Endothelial cell of umbilical vein (primary cell): ENCODE measurements at regions of chr16 and their contacts with region 1.

Region 1: DNA sequence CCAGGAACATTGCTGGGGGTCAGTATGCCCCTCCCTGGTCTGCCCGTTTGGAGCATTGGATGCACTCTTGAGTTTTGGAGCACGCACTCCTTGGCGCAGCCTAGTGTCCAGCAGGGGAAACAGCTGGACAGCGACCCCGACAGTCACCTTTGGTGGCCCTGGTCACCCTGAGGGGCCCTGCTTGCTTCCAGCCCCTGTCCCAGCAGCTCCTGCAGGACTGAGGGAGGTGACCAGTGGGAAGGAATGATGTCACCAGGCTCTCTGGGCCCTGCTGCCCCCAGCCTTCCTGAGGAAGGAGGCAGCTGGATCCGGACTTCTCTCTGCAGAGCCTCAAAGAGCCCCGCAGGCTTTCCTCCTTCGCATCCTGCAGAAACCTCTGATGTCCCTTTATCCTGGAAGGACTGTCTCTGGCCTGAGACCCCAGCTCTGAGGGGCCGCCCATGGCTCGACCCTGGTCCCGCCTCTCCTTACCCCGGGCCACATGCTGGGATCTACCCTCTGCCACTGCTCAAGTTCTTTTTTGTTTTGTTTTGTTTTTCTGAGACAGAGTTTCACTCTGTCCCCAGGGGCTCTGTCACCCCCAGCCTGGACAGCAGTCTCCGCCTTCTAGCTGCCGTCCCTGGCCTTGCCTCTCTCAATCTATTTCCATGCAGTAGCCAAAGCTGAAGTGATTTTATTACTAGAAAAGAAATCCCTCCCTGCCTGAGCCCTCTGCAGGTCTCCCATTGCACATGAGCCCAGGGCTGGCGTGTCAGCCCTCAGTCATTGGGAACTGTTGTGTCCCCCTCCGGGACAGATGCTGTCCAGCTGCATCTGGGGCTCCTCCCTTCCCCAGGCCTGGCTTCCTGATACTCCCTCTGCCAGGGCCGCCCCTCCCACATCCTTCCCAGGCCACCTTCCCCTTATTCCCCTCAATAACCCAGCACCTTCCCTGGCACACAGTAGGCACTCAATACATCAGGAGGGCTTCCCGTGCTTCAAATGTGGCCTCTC is 11.6 kb downstream of the ZSCAN10 start:
- DNase-seq: peak; percentile 89
- H3K4me3 ChIP-seq: peak overlapping the region in 1 of 3 experiments; percentile 5
- H3K27ac ChIP-seq: peak overlapping the region; percentile 73
- H3K4me1 ChIP-seq: peaks cover 25% of the 10 kb centered on the region
- H3K27me3 ChIP-seq: no peaks in the 10 kb centered on the region
- CTCF ChIP-seq: peak; percentile 3 to 23
- POLR2A ChIP-seq: peak; percentile 52

Region 2: DNA sequence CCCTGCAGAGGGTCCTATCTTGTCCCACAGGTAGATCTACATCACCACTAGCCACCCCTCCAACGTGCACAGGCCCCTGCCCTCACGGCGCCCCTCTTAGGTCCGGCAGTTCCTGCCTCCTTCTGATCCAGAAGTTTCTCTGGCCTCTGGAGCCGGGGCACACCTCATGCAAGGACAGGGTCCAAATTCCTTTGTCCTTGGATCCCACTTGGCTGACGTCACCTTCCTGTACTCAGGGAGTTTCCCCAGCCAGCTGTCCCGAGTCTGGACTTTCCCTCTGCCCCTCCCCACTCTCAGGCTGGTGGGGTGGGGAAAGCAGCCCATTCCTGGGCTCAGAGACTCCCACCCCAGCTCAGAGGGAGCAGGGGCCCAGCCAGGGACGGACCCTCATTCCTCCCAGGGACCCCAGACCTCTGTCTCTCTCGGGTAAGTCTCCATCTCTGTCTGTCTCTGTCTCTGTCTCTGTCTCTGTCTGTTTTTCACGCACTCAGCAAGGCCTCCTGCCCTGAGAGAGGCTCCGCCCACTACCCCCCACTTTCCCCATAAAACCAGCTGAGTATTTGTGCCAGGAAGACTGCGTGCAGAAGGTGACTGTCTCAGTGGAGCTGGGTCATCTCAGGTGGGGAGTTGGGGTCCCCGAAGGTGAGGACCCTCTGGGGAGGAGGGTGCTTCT is 22.3 kb before region 1 on chr16 and contains the start of gene IL32:
- CTCF ChIA-PET with region 1: interaction called, 15 read pairs
- POLR2A ChIA-PET with region 1: no interaction called
- dilution Hi-C with region 1: no loop called
- intact Hi-C with region 1: loop called (anchors 1 kb)
- DNase-seq: peak; percentile 88
- H3K4me3 ChIP-seq: peak within 1 kb of the TSS in 2 of 3 experiments; percentile 40 to 54
- H3K27ac ChIP-seq: peak within 1 kb of the TSS; percentile 94
- H3K4me1 ChIP-seq: peaks cover 19% of the 10 kb centered on the region
- H3K27me3 ChIP-seq: no peaks in the 10 kb centered on the region
- CTCF ChIP-seq: no peak
- POLR2A ChIP-seq: no peak
- total RNA-seq, gene IL32: 55.7 and 127 TPM in 2 replicates

Region 3: DNA sequence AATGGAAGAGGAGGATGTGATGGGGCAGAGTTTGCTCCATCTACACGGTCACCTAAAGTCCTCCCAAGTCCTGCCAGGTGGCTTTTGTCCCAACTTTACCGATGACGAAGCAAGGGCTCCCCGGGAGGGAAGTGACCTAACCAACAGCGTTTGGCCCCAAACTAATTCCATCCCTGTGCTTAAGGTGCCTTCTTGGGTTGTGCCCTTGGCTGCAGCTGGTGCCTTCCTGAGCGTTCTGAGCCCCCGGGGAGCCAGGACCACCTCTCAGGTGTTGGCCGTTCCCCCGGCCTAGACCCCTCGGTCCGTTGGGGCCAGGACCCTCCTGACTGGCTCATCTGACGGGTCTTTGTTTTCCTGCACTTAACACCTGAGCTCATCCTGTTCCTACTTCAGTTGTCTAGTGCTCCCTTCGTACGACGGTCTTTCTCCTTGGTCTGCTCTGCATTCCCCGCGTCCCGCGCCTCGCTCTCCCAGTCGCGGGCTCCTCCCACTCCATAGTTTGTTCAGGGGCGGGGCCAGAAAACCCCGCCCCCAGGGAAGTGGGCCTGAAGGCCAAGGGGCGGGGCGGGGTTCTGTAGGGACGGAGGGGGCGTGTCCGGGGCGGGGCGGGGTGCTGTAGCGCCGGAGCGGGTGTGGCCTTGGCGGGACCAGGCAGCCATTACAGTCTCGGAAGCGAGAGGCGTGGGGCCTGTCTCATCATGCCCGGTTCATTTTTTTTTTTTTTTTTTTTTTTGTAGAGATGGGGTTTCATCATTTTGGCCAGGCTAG is 12.4 kb after region 1 on chr16:
- CTCF ChIA-PET with region 1: interaction called, 9 read pairs
- POLR2A ChIA-PET with region 1: no interaction called
- dilution Hi-C with region 1: no loop called
- intact Hi-C with region 1: loop called (anchors 1 kb)
- DNase-seq: peak; percentile 81
- H3K4me3 ChIP-seq: no peak overlapping the region
- H3K27ac ChIP-seq: no peak overlapping the region
- H3K4me1 ChIP-seq: peaks cover 26% of the 10 kb centered on the region
- H3K27me3 ChIP-seq: peaks cover 0 to 2% of the 10 kb centered on the region in 2 experiments
- CTCF ChIP-seq: no peak
- POLR2A ChIP-seq: no peak